ENCODE measurements at regions of chr1 and their contacts with region 1.

Region 1: GRCh38 chr1:91811363-91812025 is 74.5 kb downstream of the TGFBR3 start:
- DNase-seq: no peak

Region 2: DNA sequence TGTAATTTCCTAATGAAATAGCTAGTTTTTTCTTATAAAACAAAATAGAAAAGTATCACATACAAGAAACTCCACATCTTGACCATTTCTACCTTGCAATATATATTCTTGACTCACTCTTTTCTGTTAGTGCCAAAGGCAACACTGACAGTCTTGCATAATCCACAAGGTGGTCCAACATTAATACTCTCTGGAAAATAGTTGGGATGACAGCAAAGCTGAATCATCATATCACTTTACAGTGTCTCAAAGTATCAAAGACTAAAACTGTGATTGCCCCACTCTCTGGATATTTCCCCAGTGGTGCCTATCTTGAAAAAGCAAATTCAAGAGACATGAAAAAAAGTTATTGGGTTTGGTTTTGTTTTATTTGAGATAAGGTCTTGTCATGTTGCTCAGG is 89.0 kb after region 1 on chr1:
- intact Hi-C with region 1: no loop called
- DNase-seq: no peak

Region 3: DNA sequence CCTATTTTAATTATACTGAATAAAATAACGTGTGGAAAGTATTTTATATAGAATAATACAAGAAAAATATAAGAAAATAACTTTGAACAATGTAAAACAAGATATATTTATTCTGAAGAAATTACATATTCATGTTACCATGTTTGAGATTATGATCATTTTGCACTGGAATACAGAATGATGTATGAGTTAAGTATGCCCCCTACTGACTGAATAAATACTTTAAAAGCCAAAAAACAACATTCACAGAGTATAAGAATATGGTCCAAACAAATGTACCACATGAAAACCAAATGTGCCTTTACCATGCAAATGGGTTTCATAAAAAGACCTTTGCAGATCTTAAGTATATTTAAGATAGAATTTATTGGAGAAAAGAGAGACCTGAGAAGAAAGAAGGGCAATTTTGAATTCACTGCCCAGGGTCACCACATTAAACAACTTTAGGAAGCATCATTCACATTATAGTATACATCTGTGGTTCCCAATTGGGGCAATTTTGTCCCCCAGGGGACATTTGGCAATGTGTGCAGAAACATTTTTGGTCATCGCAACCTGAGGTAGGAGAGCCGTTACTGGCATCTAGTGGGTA is 811.8 kb after region 1 on chr1:
- intact Hi-C with region 1: loop called in 1 of 2 experiments (anchors 5 kb)
- DNase-seq: no peak